H1 (cell line): ENCODE measurements at regions of chr15 and their contacts with region 1.

Region 1: DNA sequence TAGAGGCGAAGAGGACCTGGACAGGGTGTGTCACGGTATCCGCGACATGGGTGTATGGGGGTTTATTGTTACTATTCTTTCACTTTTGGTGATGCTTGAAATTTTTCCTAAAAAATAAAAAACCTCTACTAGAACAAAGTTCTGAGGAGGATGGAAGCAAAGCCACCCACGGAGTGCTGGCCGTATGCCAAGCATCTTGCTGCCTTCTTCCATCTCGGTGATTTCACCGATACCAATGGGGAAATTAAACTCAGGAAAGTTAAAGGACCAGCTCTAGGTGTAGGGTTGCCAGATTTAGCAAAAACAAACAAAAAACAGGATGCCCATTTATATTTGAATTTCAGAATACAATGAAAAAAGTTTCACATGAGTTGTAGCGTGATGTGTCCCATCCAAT is 33.9 kb downstream of the SMAD6 start:
- DNase-seq: no peak
- H3K4me3 ChIP-seq: no peak overlapping the region
- H3K27ac ChIP-seq: no peak overlapping the region
- H3K4me1 ChIP-seq: peaks cover 0 to 5% (median 0%) of the 10 kb centered on the region in 4 experiments; a peak in 2 of 7 replicates
- H3K27me3 ChIP-seq: no peaks in the 10 kb centered on the region
- CTCF ChIP-seq: no peak
- EP300 ChIP-seq: no peak
- POLR2A ChIP-seq: no peak
- RAD21 ChIP-seq: no peak

Region 2: GRCh38 chr15:66707310-66708082 is 28.4 kb before region 1 on chr15:
- CTCF ChIA-PET with region 1: interaction called, 27 read pairs
- POLR2A ChIA-PET with region 1: no interaction called
- DNase-seq: peak; percentile 70 to 74
- H3K4me3 ChIP-seq: no peak overlapping the region; a peak in 1 of 8 replicates
- H3K27ac ChIP-seq: no peak overlapping the region
- H3K4me1 ChIP-seq: peaks cover 0 to 25% (median 14%) of the 10 kb centered on the region in 4 experiments; a peak in 6 of 7 replicates
- H3K27me3 ChIP-seq: peaks cover 18 to 34% (median 27%) of the 10 kb centered on the region in 4 experiments; a peak in 6 of 7 replicates
- CTCF ChIP-seq: peak; percentile 57 to 72 (median 61)
- EP300 ChIP-seq: no peak
- POLR2A ChIP-seq: no peak
- RAD21 ChIP-seq: peak; percentile 53 to 70